ENCODE measurements at regions of chr1 and their contacts with region 1.

Region 1: GRCh38 chr1:160777486-160778089 is 18.4 kb upstream of the LY9 start:
- DNase-seq: no peak
- ATAC-seq: peak; percentile 36
- H3K4me3 ChIP-seq: no peak overlapping the region
- H3K27ac ChIP-seq: no peak overlapping the region
- H3K4me1 ChIP-seq: peaks cover 50% of the 10 kb centered on the region
- H3K27me3 ChIP-seq: no peaks in the 10 kb centered on the region
- CTCF ChIP-seq: peak; percentile 66 to 78 (median 67)
- EP300 ChIP-seq: no peak
- POLR2A ChIP-seq: no peak
- RAD21 ChIP-seq: peak; percentile 81

Region 2: GRCh38 chr1:160284782-160285344 is 492.7 kb before region 1 on chr1 and contains the start of gene PEX19:
- CTCF ChIA-PET with region 1: no interaction called
- POLR2A ChIA-PET with region 1: no interaction called
- RAD21 ChIA-PET with region 1: no interaction called
- SMC1A ChIA-PET with region 1: no interaction called
- in situ Hi-C with region 1: no loop called
- intact Hi-C with region 1: no loop called
- DNase-seq: peak; percentile 71
- ATAC-seq: peak; percentile 100
- H3K4me3 ChIP-seq: peak within 1 kb of the TSS; percentile 91
- H3K27ac ChIP-seq: peak within 1 kb of the TSS; percentile 68
- H3K4me1 ChIP-seq: no peaks in the 10 kb centered on the region
- H3K27me3 ChIP-seq: no peaks in the 10 kb centered on the region
- CTCF ChIP-seq: no peak
- EP300 ChIP-seq: no peak
- POLR2A ChIP-seq: peak; percentile 90
- RAD21 ChIP-seq: no peak
- polyA plus RNA-seq, gene PEX19: 29.4 to 50.8 TPM

Region 3: DNA sequence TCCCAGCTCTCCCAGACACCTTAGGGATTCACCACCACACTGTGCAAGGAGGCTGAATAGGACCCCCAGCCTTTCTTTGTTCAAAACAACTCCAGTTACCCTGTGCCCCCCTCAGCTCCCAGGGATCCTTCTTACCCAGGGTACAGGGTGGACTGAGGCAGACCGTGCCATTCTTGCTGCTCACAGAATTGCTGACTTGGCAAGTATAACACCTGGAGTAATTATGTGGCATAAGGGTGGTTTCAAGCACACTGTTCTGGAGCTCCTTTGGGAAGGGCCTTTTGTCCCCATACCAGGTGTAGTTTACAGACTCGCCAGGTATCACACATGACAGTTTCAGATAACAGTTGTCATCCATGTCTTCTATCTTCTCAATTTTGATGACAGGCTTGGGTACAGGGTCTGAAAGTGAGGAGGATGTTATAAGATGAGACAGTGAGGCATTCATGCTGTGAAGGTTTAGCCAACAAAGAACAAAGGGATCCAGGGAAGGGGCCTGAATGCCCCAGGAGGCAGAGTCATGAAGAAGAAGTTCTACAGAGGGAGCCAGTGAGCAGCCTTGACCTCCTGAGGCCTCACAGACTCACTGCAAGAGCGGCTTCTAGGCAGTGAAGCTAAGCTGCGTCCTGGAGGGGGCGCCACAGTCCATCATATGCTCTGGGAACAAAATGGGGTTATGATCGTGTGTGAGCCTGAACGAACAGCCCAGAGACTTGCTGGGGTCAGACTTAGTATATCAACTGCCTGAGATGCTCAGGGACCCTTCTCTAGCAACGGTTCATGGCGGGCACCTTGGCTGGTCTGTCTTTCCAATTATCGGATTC is 96.3 kb before region 1 on chr1:
- CTCF ChIA-PET with region 1: interaction called, 47 read pairs
- POLR2A ChIA-PET with region 1: interaction called, 3 read pairs
- RAD21 ChIA-PET with region 1: interaction called, 27 read pairs
- SMC1A ChIA-PET with region 1: interaction called, 24 read pairs
- in situ Hi-C with region 1: no loop called
- intact Hi-C with region 1: no loop called
- DNase-seq: no peak
- ATAC-seq: peak; percentile 89
- H3K4me3 ChIP-seq: no peak overlapping the region
- H3K27ac ChIP-seq: peak overlapping the region; percentile 14; the same call in 1 of the 2 replicates
- H3K4me1 ChIP-seq: peaks cover 38% of the 10 kb centered on the region
- H3K27me3 ChIP-seq: no peaks in the 10 kb centered on the region
- CTCF ChIP-seq: peak; percentile 85 to 97 (median 95); a peak in 5 of 6 replicates
- EP300 ChIP-seq: no peak
- POLR2A ChIP-seq: peak; percentile 61; the same call in 1 of the 2 replicates
- RAD21 ChIP-seq: peak; percentile 91

Region 4: GRCh38 chr1:160726498-160727315 is 50.9 kb before region 1 on chr1:
- CTCF ChIA-PET with region 1: interaction called, 49 read pairs
- POLR2A ChIA-PET with region 1: interaction called, 22 read pairs
- RAD21 ChIA-PET with region 1: interaction called, 47 read pairs
- SMC1A ChIA-PET with region 1: interaction called, 301 read pairs
- in situ Hi-C with region 1: no loop called
- intact Hi-C with region 1: no loop called
- DNase-seq: no peak
- ATAC-seq: peak; percentile 80
- H3K4me3 ChIP-seq: no peak overlapping the region
- H3K27ac ChIP-seq: peak overlapping the region; percentile 85
- H3K4me1 ChIP-seq: peaks cover 40% of the 10 kb centered on the region
- H3K27me3 ChIP-seq: no peaks in the 10 kb centered on the region
- CTCF ChIP-seq: peak; percentile 81 to 92 (median 91); a peak in 5 of 6 replicates
- EP300 ChIP-seq: no peak
- POLR2A ChIP-seq: no peak
- RAD21 ChIP-seq: peak; percentile 99

Region 5: GRCh38 chr1:160755911-160756848 is 21.4 kb before region 1 on chr1:
- CTCF ChIA-PET with region 1: interaction called, 10 read pairs
- POLR2A ChIA-PET with region 1: interaction called, 5 read pairs
- RAD21 ChIA-PET with region 1: interaction called, 5 read pairs
- SMC1A ChIA-PET with region 1: interaction called, 8 read pairs
- in situ Hi-C with region 1: no loop called
- intact Hi-C with region 1: no loop called
- DNase-seq: no peak
- ATAC-seq: peak; percentile 77
- H3K4me3 ChIP-seq: no peak overlapping the region
- H3K27ac ChIP-seq: peak overlapping the region; percentile 49
- H3K4me1 ChIP-seq: peaks cover 20% of the 10 kb centered on the region
- H3K27me3 ChIP-seq: no peaks in the 10 kb centered on the region
- CTCF ChIP-seq: no peak
- EP300 ChIP-seq: peak; percentile 32 to 43; a peak in 1 of 4 replicates
- POLR2A ChIP-seq: peak; percentile 44; the same call in 1 of the 2 replicates
- RAD21 ChIP-seq: no peak

Region 6: GRCh38 chr1:160818207-160818937 is 40.8 kb after region 1 on chr1:
- CTCF ChIA-PET with region 1: interaction called, 8 read pairs
- POLR2A ChIA-PET with region 1: interaction called, 4 read pairs
- RAD21 ChIA-PET with region 1: interaction called, 3 read pairs
- SMC1A ChIA-PET with region 1: interaction called, 15 read pairs
- in situ Hi-C with region 1: no loop called
- intact Hi-C with region 1: no loop called
- DNase-seq: no peak
- ATAC-seq: no peak
- H3K4me3 ChIP-seq: no peak overlapping the region
- H3K27ac ChIP-seq: no peak overlapping the region
- H3K4me1 ChIP-seq: no peaks in the 10 kb centered on the region
- H3K27me3 ChIP-seq: no peaks in the 10 kb centered on the region
- CTCF ChIP-seq: no peak
- EP300 ChIP-seq: no peak
- POLR2A ChIP-seq: no peak
- RAD21 ChIP-seq: no peak

Region 7: DNA sequence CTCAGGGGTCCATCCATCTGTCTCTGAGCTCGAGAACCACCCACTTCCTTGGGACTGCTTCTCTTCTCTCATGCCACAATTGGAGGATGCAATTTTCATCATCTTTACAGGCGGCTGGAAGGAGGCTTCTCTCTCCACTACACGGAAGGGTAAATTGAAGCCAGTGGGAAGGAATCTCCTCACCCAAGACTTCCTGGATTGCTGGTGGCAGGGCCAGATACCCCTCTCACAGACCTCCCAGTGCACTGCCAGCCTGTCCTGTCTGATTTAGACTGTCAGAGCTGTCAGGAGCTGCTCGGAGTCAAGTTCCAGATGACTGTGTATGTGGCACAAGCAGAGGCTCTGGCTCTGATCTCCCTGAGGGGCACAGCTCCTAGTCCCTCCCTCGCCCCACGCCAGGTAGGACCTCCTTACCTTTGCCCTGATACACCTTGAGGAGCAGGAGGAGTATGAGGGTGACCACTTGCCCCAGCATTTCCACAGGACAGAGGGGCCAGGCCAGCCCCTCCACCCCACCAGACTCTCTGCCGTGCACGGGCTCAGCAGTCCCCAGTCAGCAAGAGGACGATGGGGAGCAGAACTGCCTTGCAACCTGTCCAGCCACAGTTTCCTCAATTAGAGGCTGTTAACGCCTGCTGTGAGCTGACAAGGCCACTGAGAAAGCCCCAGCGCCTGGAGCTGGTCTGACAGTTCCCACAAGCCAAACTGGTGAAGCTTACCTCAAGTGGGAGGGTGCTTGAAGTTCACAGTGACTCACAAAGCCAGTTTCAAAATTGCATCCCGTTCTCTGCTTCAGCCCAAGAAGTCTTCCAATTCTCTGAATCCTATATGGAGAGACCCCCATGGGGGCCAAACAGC is 84.8 kb after region 1 on chr1 and contains the start of gene CD244:
- CTCF ChIA-PET with region 1: interaction called, 9 read pairs
- POLR2A ChIA-PET with region 1: interaction called, 13 read pairs
- RAD21 ChIA-PET with region 1: interaction called, 23 read pairs
- SMC1A ChIA-PET with region 1: interaction called, 10 read pairs
- in situ Hi-C with region 1: no loop called
- intact Hi-C with region 1: no loop called
- DNase-seq: peak; percentile 71
- ATAC-seq: peak; percentile 96
- H3K4me3 ChIP-seq: peak within 1 kb of the TSS; percentile 32; the same call in 1 of the 2 replicates
- H3K27ac ChIP-seq: no peak within 1 kb of the TSS
- H3K4me1 ChIP-seq: peaks cover 15% of the 10 kb centered on the region
- H3K27me3 ChIP-seq: no peaks in the 10 kb centered on the region
- CTCF ChIP-seq: no peak
- EP300 ChIP-seq: peak in 1 of 2 experiments; percentile 60; a peak in 1 of 4 replicates
- POLR2A ChIP-seq: peak; percentile 56
- RAD21 ChIP-seq: no peak
- polyA plus RNA-seq, gene CD244: 0.24 to 0.37 TPM

Region 8: DNA sequence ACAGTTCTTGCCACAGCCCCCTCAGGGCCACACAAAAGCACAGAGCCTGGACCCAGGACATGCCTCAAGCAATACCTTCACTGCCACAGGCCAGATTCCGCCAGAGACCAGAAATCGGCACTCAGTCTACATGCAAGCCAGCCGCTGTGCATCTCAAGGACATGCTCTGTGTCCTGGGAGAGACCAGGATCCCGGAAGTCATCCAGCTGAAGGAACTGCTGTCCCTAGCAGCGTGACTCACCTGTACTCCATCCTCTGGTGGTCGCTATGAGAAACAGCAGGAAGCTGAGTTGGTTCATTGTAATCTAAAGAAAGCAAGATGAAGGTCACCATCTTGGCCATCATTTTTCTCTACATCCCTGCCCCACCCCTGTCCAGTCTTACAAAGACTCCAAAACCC is 107.0 kb after region 1 on chr1:
- CTCF ChIA-PET with region 1: interaction called, 20 read pairs
- POLR2A ChIA-PET with region 1: no interaction called
- RAD21 ChIA-PET with region 1: interaction called, 3 read pairs
- SMC1A ChIA-PET with region 1: no interaction called
- in situ Hi-C with region 1: no loop called
- intact Hi-C with region 1: no loop called
- DNase-seq: no peak
- ATAC-seq: peak; percentile 65
- H3K4me3 ChIP-seq: no peak overlapping the region
- H3K27ac ChIP-seq: no peak overlapping the region
- H3K4me1 ChIP-seq: no peaks in the 10 kb centered on the region
- H3K27me3 ChIP-seq: no peaks in the 10 kb centered on the region
- CTCF ChIP-seq: peak; percentile 10 to 54 (median 40); a peak in 3 of 6 replicates
- EP300 ChIP-seq: no peak
- POLR2A ChIP-seq: no peak
- RAD21 ChIP-seq: peak; percentile 41